GM10248 (cell line): ENCODE measurements at regions of chr17 and their contacts with region 1.

Region 1: DNA sequence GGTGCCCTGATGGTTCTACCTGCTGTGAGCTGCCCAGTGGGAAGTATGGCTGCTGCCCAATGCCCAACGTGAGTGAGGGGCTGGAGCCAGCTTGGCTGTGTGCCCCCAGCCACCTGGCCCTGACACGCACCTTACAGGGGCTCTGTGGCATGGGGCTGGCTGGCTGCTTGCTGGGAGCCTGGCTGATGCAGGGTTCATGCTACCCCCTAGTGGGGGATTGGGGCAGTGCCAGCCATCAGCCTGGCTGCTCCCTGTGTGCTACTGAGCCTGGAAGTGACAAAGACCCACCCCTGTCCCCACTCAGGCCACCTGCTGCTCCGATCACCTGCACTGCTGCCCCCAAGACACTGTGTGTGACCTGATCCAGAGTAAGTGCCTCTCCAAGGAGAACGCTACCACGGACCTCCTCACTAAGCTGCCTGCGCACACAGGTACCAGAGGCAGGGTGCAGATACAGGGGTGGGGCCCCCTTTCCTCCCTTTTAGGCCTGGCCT is 5.7 kb downstream of the GRN start:
- DNase-seq: peak; percentile 84
- CTCF ChIP-seq: peak; percentile 87

Region 2: DNA sequence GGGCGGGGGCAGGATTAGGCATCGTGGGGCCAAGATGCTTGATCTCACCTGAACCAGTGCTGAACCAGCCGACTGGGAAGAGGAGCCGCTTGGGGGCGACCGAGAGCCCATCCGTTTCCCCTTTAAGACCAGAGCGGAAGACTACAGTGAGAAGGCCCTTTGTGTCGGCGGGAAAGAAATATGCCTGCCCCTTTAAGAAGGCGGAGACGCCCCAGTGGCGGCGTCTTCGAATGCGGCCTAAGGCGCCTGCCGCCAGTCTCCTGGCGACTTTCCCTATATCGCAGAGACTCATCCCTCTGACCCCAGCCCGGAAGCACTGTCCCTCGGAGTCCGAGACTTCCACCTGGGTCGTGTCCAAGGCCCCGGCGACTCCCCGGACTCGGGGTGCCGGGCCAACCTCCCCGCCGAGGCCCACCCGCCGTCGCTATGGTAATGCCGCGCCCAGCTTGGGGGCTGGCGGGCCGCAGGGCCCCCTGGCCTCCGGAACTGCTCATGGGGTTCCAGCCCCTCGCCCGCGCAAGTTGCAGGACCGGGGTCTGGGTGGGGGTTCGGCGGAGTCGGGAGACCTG is 209.0 kb before region 1 on chr17 and contains the start of gene HROB:
- CTCF ChIA-PET with region 1: no interaction called
- POLR2A ChIA-PET with region 1: no interaction called
- DNase-seq: peak; percentile 95
- CTCF ChIP-seq: peak; percentile 91

Region 3: GRCh38 chr17:44199553-44200477 is 151.0 kb before region 1 on chr17 and contains the start of gene ATXN7L3:
- CTCF ChIA-PET with region 1: interaction called, 15 read pairs
- POLR2A ChIA-PET with region 1: no interaction called
- DNase-seq: peak; percentile 99
- CTCF ChIP-seq: no peak

Region 4: GRCh38 chr17:44363613-44364159 is 12.9 kb after region 1 on chr17 and contains the start of gene FAM171A2:
- CTCF ChIA-PET with region 1: interaction called, 135 read pairs
- POLR2A ChIA-PET with region 1: interaction called, 3 read pairs
- DNase-seq: peak; percentile 90
- CTCF ChIP-seq: peak; percentile 67

Region 5: GRCh38 chr17:44376124-44376523 is 25.3 kb after region 1 on chr17:
- CTCF ChIA-PET with region 1: interaction called, 17 read pairs
- POLR2A ChIA-PET with region 1: no interaction called
- DNase-seq: peak; percentile 73
- CTCF ChIP-seq: peak; percentile 37